ENCODE measurements at regions of chr13 and their contacts with region 1.

Region 1: DNA sequence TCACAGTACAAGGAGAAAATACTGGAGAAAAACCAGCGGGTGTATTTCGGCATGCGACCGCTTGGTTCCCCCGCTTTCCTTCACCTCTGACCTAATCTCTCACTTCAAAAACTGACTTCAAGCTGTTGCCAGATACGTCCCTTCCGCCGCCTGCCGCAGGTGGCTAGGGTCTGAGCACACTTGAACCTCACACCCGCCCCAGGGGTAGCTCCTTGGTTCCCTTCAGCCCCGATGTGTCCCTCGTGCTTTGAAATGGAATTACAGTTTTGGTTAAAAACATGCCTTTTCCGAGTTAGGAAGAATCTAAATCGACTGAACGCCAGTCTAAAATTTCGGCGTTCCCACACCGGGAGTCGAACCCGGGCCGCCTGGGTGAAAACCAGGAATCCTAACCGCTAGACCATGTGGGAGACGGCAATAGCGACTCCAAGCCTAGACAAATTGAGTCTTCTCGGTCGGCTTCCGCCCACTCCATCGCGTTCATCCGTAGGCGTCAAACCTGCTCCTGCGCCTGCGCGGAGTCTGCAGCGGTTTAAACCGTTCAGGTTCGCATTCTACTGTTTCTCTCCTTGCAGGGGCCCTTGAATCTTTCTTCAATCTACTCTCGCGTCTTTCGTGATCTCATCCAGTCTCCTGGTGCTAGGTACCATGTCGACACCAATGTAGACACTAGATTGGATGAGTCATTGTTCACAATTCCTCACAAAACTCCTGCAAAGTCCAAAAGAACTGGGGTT is 71.5 kb downstream of the NUFIP1 start:
- DNase-seq: peak; percentile 98
- ATAC-seq: peak; percentile 90
- H3K4me3 ChIP-seq: peak overlapping the region; percentile 84
- H3K27ac ChIP-seq: peak overlapping the region; percentile 80
- H3K4me1 ChIP-seq: peaks cover 3% of the 10 kb centered on the region; the same call in 1 of the 2 replicates
- H3K27me3 ChIP-seq: no peaks in the 10 kb centered on the region
- CTCF ChIP-seq: peak in 2 of 3 experiments; percentile 11 to 40; a peak in 5 of 6 replicates
- EP300 ChIP-seq: peak in 1 of 2 experiments; percentile 79; a peak in 2 of 4 replicates
- POLR2A ChIP-seq: peak; percentile 64; the same call in 1 of the 2 replicates
- RAD21 ChIP-seq: peak; percentile 26; the same call in 1 of the 2 replicates

Region 2: DNA sequence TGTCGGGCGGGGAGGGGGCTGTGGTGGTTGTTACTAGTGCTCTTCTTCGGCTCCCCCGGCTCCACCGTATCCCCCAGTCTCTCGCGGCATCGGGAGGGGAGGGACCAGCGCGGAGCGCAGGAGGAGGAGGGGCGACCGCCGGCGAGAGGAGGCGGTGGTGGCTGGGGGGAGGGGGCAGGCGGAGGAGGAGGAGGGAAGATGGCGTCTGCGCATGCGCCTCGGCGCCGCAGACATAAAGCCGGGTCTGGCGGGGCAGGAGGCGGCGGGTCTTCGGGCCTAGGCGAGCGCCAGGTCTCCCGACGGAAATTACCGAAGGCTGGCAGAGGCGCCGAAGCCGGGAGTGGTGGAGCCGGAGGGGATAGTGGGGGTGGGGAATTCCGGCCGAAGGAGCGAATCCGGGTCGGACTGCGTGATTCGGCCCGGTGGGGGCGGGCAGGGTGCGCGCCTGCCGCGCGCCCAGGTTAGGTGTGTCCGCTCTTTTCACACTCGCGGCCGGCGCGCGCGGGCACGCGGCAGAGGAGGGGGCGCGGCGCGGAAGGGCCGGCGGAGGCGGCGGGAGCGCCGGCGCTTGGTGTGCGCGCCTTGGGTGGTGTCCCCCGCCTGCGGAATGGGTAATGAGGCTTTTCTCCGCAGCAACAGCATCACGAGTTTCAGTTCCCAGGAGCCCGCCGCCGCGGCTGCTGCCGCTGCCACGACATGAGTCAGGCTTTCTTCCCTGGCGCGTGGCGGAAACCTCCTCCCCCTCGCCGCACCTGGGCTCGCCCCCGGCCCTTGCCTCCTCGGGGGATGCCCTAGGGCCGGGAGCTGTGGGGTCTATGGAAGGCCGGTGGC is 340.3 kb before region 1 on chr13:
- CTCF ChIA-PET with region 1: no interaction called
- POLR2A ChIA-PET with region 1: no interaction called
- RAD21 ChIA-PET with region 1: no interaction called
- SMC1A ChIA-PET with region 1: no interaction called
- in situ Hi-C with region 1: no loop called
- intact Hi-C with region 1: loop called (anchors 10 kb)
- DNase-seq: peak; percentile 45
- ATAC-seq: peak; percentile 86
- H3K4me3 ChIP-seq: peak overlapping the region; percentile 81
- H3K27ac ChIP-seq: peak overlapping the region; percentile 83
- H3K4me1 ChIP-seq: peaks cover 14% of the 10 kb centered on the region
- H3K27me3 ChIP-seq: peaks cover 0 to 10% of the 10 kb centered on the region in 2 experiments; a peak in 2 of 4 replicates
- CTCF ChIP-seq: no peak
- EP300 ChIP-seq: peak; percentile 41 to 55; a peak in 3 of 4 replicates
- POLR2A ChIP-seq: peak; percentile 66
- RAD21 ChIP-seq: no peak

Region 3: DNA sequence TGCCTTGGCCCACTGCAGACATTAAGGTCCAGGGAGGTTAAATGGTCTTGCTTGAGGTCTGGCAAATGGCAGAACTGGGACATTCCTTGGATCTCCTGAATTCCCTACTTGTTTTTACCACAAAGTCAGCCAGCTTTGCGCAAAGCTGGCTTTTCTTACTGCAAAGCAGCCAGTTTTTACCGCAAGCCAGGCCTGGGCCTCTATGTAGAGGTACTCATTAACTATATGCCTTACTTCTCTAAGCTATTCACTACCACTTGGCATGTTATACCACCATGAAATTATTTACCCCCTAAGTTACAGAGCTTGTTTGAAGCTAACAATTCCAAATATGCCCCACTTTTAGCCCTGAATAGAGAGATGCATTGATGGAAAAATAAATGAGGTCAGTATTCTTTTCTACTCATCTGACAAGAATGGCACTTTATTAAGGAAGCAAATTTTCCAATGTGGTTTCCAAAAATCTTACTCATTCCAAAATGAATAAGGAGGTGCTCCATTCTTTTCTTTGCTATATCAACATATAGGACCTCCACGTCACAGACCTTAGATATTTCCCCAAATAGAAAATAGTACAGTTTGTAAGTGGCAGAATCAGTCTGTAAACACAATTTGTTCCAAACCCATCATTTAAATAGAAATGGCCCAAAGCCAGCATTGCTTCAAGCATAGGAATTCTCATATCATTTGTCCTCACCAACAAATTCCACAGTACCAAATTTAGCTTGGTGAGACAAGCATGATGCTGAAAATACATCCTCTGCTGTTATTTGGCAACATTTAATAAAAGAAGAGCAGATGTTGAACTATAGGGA is 197.7 kb before region 1 on chr13:
- CTCF ChIA-PET with region 1: no interaction called
- POLR2A ChIA-PET with region 1: no interaction called
- RAD21 ChIA-PET with region 1: no interaction called
- SMC1A ChIA-PET with region 1: no interaction called
- in situ Hi-C with region 1: no loop called
- intact Hi-C with region 1: no loop called
- DNase-seq: no peak
- ATAC-seq: no peak
- H3K4me3 ChIP-seq: no peak overlapping the region
- H3K27ac ChIP-seq: no peak overlapping the region
- H3K4me1 ChIP-seq: no peaks in the 10 kb centered on the region
- H3K27me3 ChIP-seq: no peaks in the 10 kb centered on the region
- CTCF ChIP-seq: no peak
- EP300 ChIP-seq: no peak
- POLR2A ChIP-seq: no peak
- RAD21 ChIP-seq: no peak

Region 4: GRCh38 chr13:44969551-44970484 is 52.1 kb after region 1 on chr13:
- CTCF ChIA-PET with region 1: interaction called, 13 read pairs
- POLR2A ChIA-PET with region 1: no interaction called
- RAD21 ChIA-PET with region 1: interaction called, 3 read pairs
- SMC1A ChIA-PET with region 1: interaction called, 5 read pairs
- in situ Hi-C with region 1: no loop called
- intact Hi-C with region 1: loop called (anchors 2 kb)
- DNase-seq: no peak
- ATAC-seq: peak; percentile 16; the same call in 1 of the 3 replicates
- H3K4me3 ChIP-seq: no peak overlapping the region
- H3K27ac ChIP-seq: no peak overlapping the region
- H3K4me1 ChIP-seq: peaks cover 5% of the 10 kb centered on the region
- H3K27me3 ChIP-seq: no peaks in the 10 kb centered on the region
- CTCF ChIP-seq: peak; percentile 48 to 70 (median 67); a peak in 5 of 6 replicates
- EP300 ChIP-seq: no peak
- POLR2A ChIP-seq: no peak
- RAD21 ChIP-seq: peak; percentile 75

Region 5: DNA sequence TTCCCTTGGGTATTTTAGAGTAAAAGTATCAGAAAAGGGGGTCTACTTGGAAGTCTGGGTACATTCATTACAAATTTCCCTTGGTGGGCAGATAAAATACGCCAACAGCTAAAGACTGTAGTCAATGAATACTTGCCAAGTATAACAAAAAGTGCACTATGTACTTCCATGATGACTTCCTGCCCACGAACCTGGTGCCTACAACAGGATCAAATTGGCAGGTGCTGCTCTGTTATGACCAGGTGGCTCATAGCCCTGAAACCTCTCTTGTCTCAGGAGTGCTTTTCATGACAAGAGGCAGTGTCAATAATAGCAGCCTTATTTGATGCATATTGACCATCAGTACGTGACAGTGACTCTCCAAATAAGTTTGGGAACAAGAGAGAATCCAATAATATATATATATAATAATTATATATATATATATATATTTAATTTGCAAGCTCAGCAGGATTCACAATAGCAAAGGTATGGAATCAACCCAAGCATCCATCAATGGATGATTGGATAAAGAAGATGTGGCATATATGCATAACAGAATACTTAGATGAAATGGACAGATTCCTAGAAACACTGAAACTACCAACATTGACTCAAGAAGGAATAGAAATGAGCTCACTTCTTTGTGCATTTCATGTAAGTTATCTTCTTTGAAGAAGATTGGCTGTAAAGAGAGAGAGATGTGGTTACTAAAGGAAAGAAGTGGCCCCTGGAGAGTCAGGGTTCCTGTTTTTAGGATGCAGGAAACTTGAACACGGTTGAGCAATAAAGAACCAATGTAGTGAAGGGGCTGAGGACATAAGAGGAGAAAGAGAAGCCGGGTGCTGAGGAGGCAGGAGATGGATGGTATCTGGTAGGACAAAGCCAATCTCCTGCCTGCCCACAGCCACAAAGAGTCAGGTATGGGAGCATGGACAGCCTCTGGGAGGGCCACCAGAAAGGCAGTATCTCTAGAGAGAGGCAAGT is 150.6 kb after region 1 on chr13:
- CTCF ChIA-PET with region 1: no interaction called
- POLR2A ChIA-PET with region 1: no interaction called
- RAD21 ChIA-PET with region 1: no interaction called
- SMC1A ChIA-PET with region 1: no interaction called
- in situ Hi-C with region 1: no loop called
- intact Hi-C with region 1: no loop called
- DNase-seq: no peak
- ATAC-seq: no peak
- H3K4me3 ChIP-seq: no peak overlapping the region
- H3K27ac ChIP-seq: no peak overlapping the region
- H3K4me1 ChIP-seq: no peaks in the 10 kb centered on the region
- H3K27me3 ChIP-seq: no peaks in the 10 kb centered on the region
- CTCF ChIP-seq: no peak
- EP300 ChIP-seq: no peak
- POLR2A ChIP-seq: no peak
- RAD21 ChIP-seq: no peak